ENCODE measurements at regions of chr2 and their contacts with region 1.

Region 1: DNA sequence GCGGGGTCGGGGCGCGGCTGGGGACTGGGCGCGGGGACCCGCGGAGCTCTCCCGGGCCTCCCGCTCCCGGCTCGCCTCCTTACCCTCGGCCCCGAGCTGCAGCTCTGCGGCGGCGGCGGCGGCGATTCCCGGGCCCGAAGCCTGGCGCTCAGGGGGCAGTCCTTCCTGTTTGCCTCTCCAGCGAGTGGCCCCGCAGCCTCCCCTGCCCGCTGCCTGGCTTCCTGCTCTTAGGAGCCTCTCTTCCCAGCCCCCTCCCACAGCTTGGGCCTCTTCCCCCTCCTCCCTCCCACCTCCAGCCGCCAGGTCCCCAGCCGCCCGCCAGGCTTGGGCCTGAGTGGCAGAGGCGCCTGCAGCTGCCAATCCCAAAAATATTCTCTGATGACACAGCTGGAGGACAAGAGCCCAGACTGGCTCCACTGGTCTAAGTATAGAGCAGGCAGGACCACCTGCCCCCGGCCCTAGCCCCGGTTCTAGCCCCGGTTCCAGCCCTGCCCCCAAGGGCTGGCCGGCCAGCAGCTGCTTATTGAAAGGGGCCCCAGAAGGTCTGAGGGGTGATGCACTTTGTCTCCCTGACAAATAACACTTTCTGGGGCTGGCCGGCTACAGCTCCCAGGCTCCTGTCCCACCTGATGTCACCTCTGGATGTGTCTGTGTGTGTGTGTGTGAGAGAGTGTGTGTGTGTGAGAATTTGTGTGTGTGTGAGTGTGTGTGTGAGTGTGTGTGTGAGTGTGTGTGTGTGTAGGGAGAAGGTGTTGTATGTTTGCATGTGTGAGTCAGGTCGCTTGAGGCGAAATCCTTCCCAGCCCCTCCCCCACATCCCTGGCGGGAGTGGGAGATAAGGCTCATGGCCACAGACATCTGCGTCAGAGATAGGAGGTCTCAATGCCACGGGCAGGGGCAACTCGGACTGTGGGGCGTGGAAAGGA is at the start of gene OBSL1:
- DNase-seq: peak; percentile 61
- H3K4me3 ChIP-seq: peak within 1 kb of the TSS in 2 of 3 experiments; percentile 36 to 75
- H3K27ac ChIP-seq: no peak within 1 kb of the TSS
- H3K4me1 ChIP-seq: no peaks in the 10 kb centered on the region
- H3K27me3 ChIP-seq: peaks cover 14 to 25% of the 10 kb centered on the region in 2 experiments
- CTCF ChIP-seq: no peak
- POLR2A ChIP-seq: no peak
- total RNA-seq, gene OBSL1: 8.0 and 16.7 TPM in 2 replicates

Region 2: GRCh38 chr2:219536967-219537366 is 34.6 kb before region 1 on chr2:
- CTCF ChIA-PET with region 1: no interaction called
- POLR2A ChIA-PET with region 1: no interaction called
- dilution Hi-C with region 1: no loop called
- intact Hi-C with region 1: no loop called
- DNase-seq: no peak
- H3K4me3 ChIP-seq: no peak overlapping the region
- H3K27ac ChIP-seq: no peak overlapping the region
- H3K4me1 ChIP-seq: no peaks in the 10 kb centered on the region
- H3K27me3 ChIP-seq: peaks cover 3 to 10% of the 10 kb centered on the region in 2 experiments
- CTCF ChIP-seq: no peak
- POLR2A ChIP-seq: no peak

Region 3: GRCh38 chr2:219560037-219560892 is 11.3 kb before region 1 on chr2:
- CTCF ChIA-PET with region 1: interaction called, 42 read pairs
- POLR2A ChIA-PET with region 1: no interaction called
- dilution Hi-C with region 1: no loop called
- intact Hi-C with region 1: no loop called
- DNase-seq: no peak
- H3K4me3 ChIP-seq: no peak overlapping the region
- H3K27ac ChIP-seq: no peak overlapping the region
- H3K4me1 ChIP-seq: no peaks in the 10 kb centered on the region
- H3K27me3 ChIP-seq: peaks cover 0 to 3% of the 10 kb centered on the region in 2 experiments
- CTCF ChIP-seq: peak; percentile 37 to 70
- POLR2A ChIP-seq: no peak

Region 4: DNA sequence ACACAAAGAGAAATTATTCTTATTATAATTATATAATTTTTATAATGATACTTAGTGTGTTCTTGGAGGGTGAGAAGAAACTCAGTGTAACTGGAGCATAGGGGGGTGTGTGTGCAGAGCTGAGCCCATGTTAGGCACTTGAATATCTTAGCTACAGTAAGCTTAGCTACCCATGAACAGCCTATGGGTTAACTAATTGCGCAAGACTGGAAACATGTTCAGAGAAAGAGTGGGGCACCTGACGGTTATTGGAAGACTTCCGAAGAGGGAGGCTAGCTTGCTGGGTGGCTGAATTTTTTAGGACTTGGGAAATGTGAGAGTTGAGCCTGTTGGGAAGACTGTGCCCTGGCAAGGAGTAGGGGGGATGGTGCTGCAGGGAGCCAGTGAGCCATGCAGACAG is 285.0 kb after region 1 on chr2:
- CTCF ChIA-PET with region 1: no interaction called
- POLR2A ChIA-PET with region 1: no interaction called
- dilution Hi-C with region 1: no loop called
- intact Hi-C with region 1: no loop called
- DNase-seq: no peak
- H3K4me3 ChIP-seq: no peak overlapping the region
- H3K27ac ChIP-seq: no peak overlapping the region
- H3K4me1 ChIP-seq: no peaks in the 10 kb centered on the region
- H3K27me3 ChIP-seq: no peaks in the 10 kb centered on the region
- CTCF ChIP-seq: no peak
- POLR2A ChIP-seq: no peak

Region 5: DNA sequence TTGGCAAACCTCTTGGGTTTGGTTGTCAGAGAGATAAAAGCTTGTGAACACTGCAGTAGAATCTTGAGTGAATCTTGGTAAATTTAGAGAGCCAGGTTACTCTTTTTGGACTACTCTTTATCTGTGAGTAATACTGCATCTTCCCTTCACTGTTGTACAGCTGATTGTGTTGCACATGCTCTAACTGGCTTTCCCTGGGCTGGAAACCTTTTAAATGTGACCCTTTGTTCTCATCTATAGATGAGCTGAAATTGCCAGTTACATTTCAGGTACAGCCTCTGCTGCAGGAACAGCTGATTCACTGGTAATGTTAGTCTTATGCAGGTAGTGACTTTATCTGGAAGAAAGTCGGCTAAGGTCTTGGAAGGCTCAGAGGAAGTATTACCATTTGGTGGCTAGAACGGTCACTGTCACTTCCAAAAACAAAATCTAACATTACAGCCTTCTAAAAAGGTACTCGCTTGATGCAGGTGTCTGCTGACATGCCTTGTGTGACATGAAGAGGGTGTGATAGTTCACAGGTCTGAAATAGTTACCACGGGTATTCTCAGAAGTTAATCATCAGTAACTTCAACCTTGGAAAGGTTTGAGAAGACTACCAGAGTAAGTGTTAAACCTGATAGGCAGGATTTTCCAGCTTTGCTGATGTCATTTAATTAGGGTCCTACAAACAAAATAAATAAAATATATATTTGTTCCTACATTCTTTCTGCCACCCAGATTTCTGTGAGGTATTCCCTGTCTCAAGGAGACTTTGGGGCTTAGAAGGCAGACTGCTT is 906.9 kb after region 1 on chr2:
- CTCF ChIA-PET with region 1: no interaction called
- POLR2A ChIA-PET with region 1: no interaction called
- dilution Hi-C with region 1: no loop called
- intact Hi-C with region 1: no loop called
- DNase-seq: no peak
- H3K4me3 ChIP-seq: no peak overlapping the region
- H3K27ac ChIP-seq: no peak overlapping the region
- H3K4me1 ChIP-seq: no peaks in the 10 kb centered on the region
- H3K27me3 ChIP-seq: no peaks in the 10 kb centered on the region
- CTCF ChIP-seq: no peak
- POLR2A ChIP-seq: no peak

Measured in endothelial cell of umbilical vein (primary cell).